Naive thymus-derived CD4-positive, alpha-beta T cell (primary cell): ENCODE measurements at regions of chr16 and their contacts with region 1.

Region 1: GRCh38 chr16:82630688-82631087 is 3.9 kb downstream of the CDH13 start:
- DNase-seq: no peak
- ATAC-seq: no peak
- H3K4me3 ChIP-seq: no peak overlapping the region
- H3K4me3 Mint-ChIP-seq: no peak overlapping the region
- H3K27ac ChIP-seq: no peak overlapping the region
- H3K27ac Mint-ChIP-seq: no peak overlapping the region
- H3K4me1 ChIP-seq: no peaks in the 10 kb centered on the region
- H3K4me1 Mint-ChIP-seq: peaks cover 0 to 9% (median 0%) of the 10 kb centered on the region in 7 donors
- H3K27me3 ChIP-seq: no peaks in the 10 kb centered on the region
- H3K27me3 Mint-ChIP-seq: peaks cover 45 to 62% (median 54%) of the 10 kb centered on the region in 5 donors

Region 2: DNA sequence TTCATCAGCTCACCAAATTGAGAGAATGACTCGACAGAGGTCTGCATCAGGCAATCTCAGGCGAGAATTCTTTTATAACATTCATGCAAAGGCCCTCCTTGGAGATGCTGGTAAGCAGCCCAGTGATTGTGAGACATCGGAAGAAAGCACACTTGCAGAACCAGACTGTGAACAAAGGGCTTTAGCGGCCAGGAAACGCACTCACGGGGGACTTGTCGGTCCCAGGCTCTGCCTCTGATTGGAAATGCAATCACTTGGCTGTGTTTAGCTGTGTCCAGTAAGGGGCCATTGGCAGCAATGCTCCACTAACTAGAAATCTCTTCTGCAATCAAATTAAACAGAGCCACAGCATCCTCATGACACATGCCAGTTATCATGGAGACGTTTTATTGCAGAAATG is 230.6 kb before region 1 on chr16:
- CTCF ChIA-PET with region 1: no interaction called
- POLR2A ChIA-PET with region 1: no interaction called
- intact Hi-C with region 1: no loop called
- DNase-seq: no peak
- ATAC-seq: no peak
- H3K4me3 ChIP-seq: no peak overlapping the region
- H3K4me3 Mint-ChIP-seq: no peak overlapping the region
- H3K27ac ChIP-seq: no peak overlapping the region
- H3K27ac Mint-ChIP-seq: no peak overlapping the region
- H3K4me1 ChIP-seq: no peaks in the 10 kb centered on the region
- H3K4me1 Mint-ChIP-seq: no peaks in the 10 kb centered on the region
- H3K27me3 ChIP-seq: no peaks in the 10 kb centered on the region
- H3K27me3 Mint-ChIP-seq: peaks cover 5 to 46% (median 17%) of the 10 kb centered on the region in 5 donors

Region 3: GRCh38 chr16:82585675-82586074 is 45.0 kb before region 1 on chr16:
- CTCF ChIA-PET with region 1: no interaction called
- POLR2A ChIA-PET with region 1: no interaction called
- intact Hi-C with region 1: no loop called
- DNase-seq: no peak
- ATAC-seq: no peak
- H3K4me3 ChIP-seq: no peak overlapping the region
- H3K4me3 Mint-ChIP-seq: no peak overlapping the region
- H3K27ac ChIP-seq: no peak overlapping the region
- H3K27ac Mint-ChIP-seq: no peak overlapping the region
- H3K4me1 ChIP-seq: no peaks in the 10 kb centered on the region
- H3K4me1 Mint-ChIP-seq: no peaks in the 10 kb centered on the region
- H3K27me3 ChIP-seq: no peaks in the 10 kb centered on the region
- H3K27me3 Mint-ChIP-seq: peaks cover 0 to 11% (median 4%) of the 10 kb centered on the region in 5 donors

Region 4: DNA sequence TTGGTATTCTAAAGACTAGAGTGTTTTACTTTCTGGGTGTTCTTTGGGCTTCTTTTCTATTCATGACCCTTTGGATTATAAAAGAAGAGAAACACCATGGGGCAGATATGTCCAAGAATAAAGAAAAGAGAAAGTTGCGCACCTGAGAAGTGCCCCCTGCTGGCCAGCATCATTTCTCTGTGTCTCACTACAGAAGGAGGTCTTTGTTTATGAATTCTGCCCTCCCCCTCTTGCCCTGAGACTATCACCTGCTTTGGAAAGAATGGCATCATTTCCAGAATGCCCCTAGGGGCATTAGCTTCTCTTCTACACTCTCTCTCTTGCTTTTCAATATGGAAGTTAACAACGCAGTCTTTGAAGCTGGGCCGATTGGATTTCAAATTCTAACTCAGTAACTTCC is 41.1 kb after region 1 on chr16:
- CTCF ChIA-PET with region 1: interaction called, 3 read pairs
- POLR2A ChIA-PET with region 1: no interaction called
- intact Hi-C with region 1: loop called in 1 of 2 experiments (anchors 1 kb)
- DNase-seq: peak in 1 of 9 donors; percentile 11
- ATAC-seq: no peak
- H3K4me3 ChIP-seq: no peak overlapping the region
- H3K4me3 Mint-ChIP-seq: no peak overlapping the region
- H3K27ac ChIP-seq: no peak overlapping the region
- H3K27ac Mint-ChIP-seq: no peak overlapping the region
- H3K4me1 ChIP-seq: no peaks in the 10 kb centered on the region
- H3K4me1 Mint-ChIP-seq: peaks cover 0 to 5% (median 0%) of the 10 kb centered on the region in 7 donors
- H3K27me3 ChIP-seq: no peaks in the 10 kb centered on the region
- H3K27me3 Mint-ChIP-seq: peaks cover 0 to 40% (median 0%) of the 10 kb centered on the region in 5 donors

Region 5: DNA sequence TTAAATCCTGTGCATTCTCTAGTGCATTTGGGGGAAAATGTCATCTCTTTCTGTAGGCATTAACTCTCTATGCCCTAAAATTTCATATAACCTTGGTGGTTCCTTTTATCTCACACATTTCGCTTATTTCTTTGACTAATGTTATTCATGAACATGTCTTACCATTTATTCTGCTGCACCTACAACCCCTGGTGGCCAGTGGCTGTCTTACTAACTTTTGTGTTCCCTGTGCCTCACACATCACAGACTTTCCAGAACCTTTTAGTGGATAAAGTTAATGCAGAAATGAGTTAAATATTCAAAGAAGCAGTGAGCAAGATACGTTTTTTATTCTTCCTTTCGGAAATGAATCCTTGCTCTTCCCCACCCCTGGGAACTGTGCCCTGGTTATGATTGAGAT is 108.0 kb after region 1 on chr16:
- CTCF ChIA-PET with region 1: no interaction called
- POLR2A ChIA-PET with region 1: no interaction called
- intact Hi-C with region 1: loop called in 1 of 2 experiments (anchors 2 kb)
- DNase-seq: no peak
- ATAC-seq: no peak
- H3K4me3 ChIP-seq: no peak overlapping the region
- H3K4me3 Mint-ChIP-seq: no peak overlapping the region
- H3K27ac ChIP-seq: no peak overlapping the region
- H3K27ac Mint-ChIP-seq: no peak overlapping the region
- H3K4me1 ChIP-seq: no peaks in the 10 kb centered on the region
- H3K4me1 Mint-ChIP-seq: no peaks in the 10 kb centered on the region
- H3K27me3 ChIP-seq: no peaks in the 10 kb centered on the region
- H3K27me3 Mint-ChIP-seq: peaks cover 5 to 23% (median 8%) of the 10 kb centered on the region in 5 donors

Region 6: GRCh38 chr16:83215406-83216001 is 584.8 kb after region 1 on chr16:
- CTCF ChIA-PET with region 1: no interaction called
- POLR2A ChIA-PET with region 1: no interaction called
- intact Hi-C with region 1: loop called in 1 of 2 experiments (anchors 1 kb)
- DNase-seq: peak in 3 of 9 donors; percentile 2 to 49 (median 22)
- ATAC-seq: peak; percentile 60
- H3K4me3 ChIP-seq: no peak overlapping the region
- H3K4me3 Mint-ChIP-seq: no peak overlapping the region
- H3K27ac ChIP-seq: no peak overlapping the region
- H3K27ac Mint-ChIP-seq: no peak overlapping the region
- H3K4me1 ChIP-seq: no peaks in the 10 kb centered on the region
- H3K4me1 Mint-ChIP-seq: no peaks in the 10 kb centered on the region
- H3K27me3 ChIP-seq: no peaks in the 10 kb centered on the region
- H3K27me3 Mint-ChIP-seq: peaks cover 0 to 5% (median 0%) of the 10 kb centered on the region in 5 donors

Region 7: GRCh38 chr16:83449861-83450260 is 819.2 kb after region 1 on chr16:
- CTCF ChIA-PET with region 1: no interaction called
- POLR2A ChIA-PET with region 1: no interaction called
- intact Hi-C with region 1: loop called in 1 of 2 experiments (anchors 5 kb)
- DNase-seq: no peak
- ATAC-seq: no peak
- H3K4me3 ChIP-seq: no peak overlapping the region
- H3K4me3 Mint-ChIP-seq: no peak overlapping the region
- H3K27ac ChIP-seq: no peak overlapping the region
- H3K27ac Mint-ChIP-seq: no peak overlapping the region
- H3K4me1 ChIP-seq: no peaks in the 10 kb centered on the region
- H3K4me1 Mint-ChIP-seq: no peaks in the 10 kb centered on the region
- H3K27me3 ChIP-seq: no peaks in the 10 kb centered on the region
- H3K27me3 Mint-ChIP-seq: peaks cover 0 to 7% (median 0%) of the 10 kb centered on the region in 5 donors